ENCODE measurements at regions of chr2 and their contacts with region 1.

Region 1: DNA sequence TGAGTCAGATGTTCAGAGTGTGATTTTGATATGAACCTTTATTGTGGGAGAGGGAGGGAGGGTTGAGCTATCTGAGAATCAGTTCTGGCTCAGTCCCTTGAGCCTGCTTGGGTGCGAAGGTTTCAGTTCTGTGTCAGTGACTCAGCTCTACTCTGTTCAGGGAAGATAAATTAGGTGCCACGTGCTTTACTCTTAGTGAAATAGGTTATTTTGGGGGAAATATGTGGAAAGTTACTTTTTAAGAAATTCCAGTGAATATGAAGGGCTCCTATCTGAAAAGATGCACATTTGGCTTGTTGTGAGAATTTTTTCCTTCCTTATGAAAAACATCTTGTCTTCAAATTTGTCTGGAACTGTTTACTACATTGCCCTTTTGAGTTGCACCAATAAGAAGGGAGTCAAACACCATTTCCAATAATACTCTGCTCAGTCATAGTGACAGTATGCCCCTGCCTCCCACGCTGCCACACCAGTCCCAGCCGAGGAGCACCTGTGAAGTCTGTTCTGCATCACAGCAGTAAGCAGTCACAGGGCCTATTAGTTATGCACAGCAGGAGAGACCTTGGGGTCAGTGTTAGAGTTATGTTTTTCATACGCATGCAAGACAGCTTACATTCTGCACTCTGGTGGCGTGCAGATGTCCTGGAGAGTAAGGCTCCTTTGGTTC is 32.8 kb upstream of the DNAH7 start:
- DNase-seq: no peak
- H3K4me3 Mint-ChIP-seq: no peak overlapping the region
- H3K27ac Mint-ChIP-seq: no peak overlapping the region
- H3K4me1 Mint-ChIP-seq: peaks cover 23% of the 10 kb centered on the region
- H3K27me3 Mint-ChIP-seq: peaks cover 5% of the 10 kb centered on the region

Region 2: GRCh38 chr2:196113061-196113974 is 11.9 kb after region 1 on chr2:
- intact Hi-C with region 1: loop called (anchors 1 kb)
- DNase-seq: no peak
- H3K4me3 Mint-ChIP-seq: no peak overlapping the region
- H3K27ac Mint-ChIP-seq: no peak overlapping the region
- H3K4me1 Mint-ChIP-seq: peaks cover 11% of the 10 kb centered on the region
- H3K27me3 Mint-ChIP-seq: no peaks in the 10 kb centered on the region

Region 3: DNA sequence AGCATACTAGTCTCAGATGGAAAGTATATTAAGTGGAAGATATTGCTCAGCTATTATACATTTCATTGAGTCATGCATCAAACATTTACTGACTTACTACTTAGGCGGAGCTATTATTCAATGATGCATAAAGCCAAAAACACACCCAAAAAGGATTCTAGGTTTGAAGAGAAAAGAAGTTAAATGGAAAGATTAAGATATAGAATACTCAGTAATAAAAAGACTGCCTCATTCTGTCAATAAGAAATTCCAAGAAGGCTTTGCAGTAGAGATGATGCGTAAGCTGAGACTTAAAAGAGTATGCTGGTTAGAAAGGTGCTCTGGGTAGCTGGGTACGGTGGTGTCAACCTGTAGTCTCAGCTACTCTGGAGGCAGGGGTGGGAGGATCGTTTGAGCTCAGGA is 42.3 kb after region 1 on chr2:
- intact Hi-C with region 1: loop called (anchors 5 kb)
- DNase-seq: no peak
- H3K4me3 Mint-ChIP-seq: no peak overlapping the region
- H3K27ac Mint-ChIP-seq: peak overlapping the region; percentile 86
- H3K4me1 Mint-ChIP-seq: peaks cover 46% of the 10 kb centered on the region
- H3K27me3 Mint-ChIP-seq: no peaks in the 10 kb centered on the region

Region 4: GRCh38 chr2:196182439-196183171 is 81.1 kb after region 1 on chr2:
- intact Hi-C with region 1: no loop called
- DNase-seq: no peak
- H3K4me3 Mint-ChIP-seq: peak overlapping the region; percentile 74
- H3K27ac Mint-ChIP-seq: peak overlapping the region; percentile 96
- H3K4me1 Mint-ChIP-seq: peaks cover 68% of the 10 kb centered on the region
- H3K27me3 Mint-ChIP-seq: no peaks in the 10 kb centered on the region

Measured in activated T-helper 2 cell treated with anti-CD3 and anti-CD28 coated beads, Interferon-gamma antibody, Interleukin-2, Interleukin-4, amounts not matched to agents 10 μg/mL and 5 μg/mL and 100 μg/mL, durations not matched to agents 14 hours and 24 hours and 36 hours (primary cell).